BJ (cell line): ENCODE measurements at regions of chr4 and their contacts with region 1.

Region 1: DNA sequence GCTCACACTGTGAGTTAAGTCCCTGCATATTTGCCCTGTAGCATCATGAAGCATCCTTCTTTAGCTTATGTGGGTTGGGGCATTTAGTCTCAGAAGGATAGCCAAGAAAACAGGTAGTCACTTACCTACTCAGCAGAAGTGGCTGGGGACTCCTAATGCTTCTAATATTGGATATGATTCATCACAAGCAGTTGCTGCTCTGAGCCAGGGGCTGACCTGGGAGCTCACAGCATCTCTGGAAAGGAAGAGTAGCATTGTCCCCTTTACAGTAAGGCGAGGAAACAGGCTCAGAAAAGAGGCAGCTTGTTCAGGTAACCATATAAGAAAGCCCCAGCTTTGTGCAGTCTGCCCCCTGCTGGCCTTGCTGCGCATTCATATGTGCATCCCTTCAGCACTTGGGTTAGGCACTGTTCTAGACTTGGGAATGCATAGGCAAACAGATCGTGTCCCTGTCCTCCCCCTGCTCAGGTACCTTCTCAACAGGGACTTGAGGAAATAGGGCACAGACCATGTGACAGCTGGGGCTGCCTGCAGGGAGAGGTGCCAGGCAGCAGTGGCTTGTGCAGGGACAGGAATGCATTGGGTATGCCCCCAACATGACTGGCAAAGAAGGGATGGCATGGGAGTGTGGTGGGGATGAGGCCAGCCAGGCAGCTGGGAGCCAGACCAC is 35.7 kb upstream of the TBC1D14 start:
- DNase-seq: no peak
- H3K4me3 ChIP-seq: no peak overlapping the region
- H3K27me3 ChIP-seq: no peaks in the 10 kb centered on the region
- CTCF ChIP-seq: peak; percentile 84

Region 2: GRCh38 chr4:6716018-6716911 is 157.7 kb before region 1 on chr4 and contains the start of gene BLOC1S4:
- CTCF ChIA-PET with region 1: interaction called, 110 read pairs
- POLR2A ChIA-PET with region 1: no interaction called
- DNase-seq: peak; percentile 43
- H3K4me3 ChIP-seq: peak within 1 kb of the TSS; percentile 92
- H3K27me3 ChIP-seq: no peaks in the 10 kb centered on the region
- CTCF ChIP-seq: peak; percentile 9; the same call in 1 of the 2 replicates
- polyA plus RNA-seq, gene BLOC1S4: 10.4 and 12.6 TPM in 2 replicates

Region 3: GRCh38 chr4:6857009-6857882 is 16.7 kb before region 1 on chr4:
- CTCF ChIA-PET with region 1: interaction called, 26 read pairs
- POLR2A ChIA-PET with region 1: no interaction called
- DNase-seq: no peak
- H3K4me3 ChIP-seq: no peak overlapping the region
- H3K27me3 ChIP-seq: no peaks in the 10 kb centered on the region
- CTCF ChIP-seq: no peak

Region 4: GRCh38 chr4:6885951-6886557 is 12.1 kb after region 1 on chr4:
- CTCF ChIA-PET with region 1: interaction called, 42 read pairs
- POLR2A ChIA-PET with region 1: no interaction called
- DNase-seq: no peak
- H3K4me3 ChIP-seq: no peak overlapping the region
- H3K27me3 ChIP-seq: no peaks in the 10 kb centered on the region
- CTCF ChIP-seq: no peak; the same call in 1 of the 2 replicates

Region 5: DNA sequence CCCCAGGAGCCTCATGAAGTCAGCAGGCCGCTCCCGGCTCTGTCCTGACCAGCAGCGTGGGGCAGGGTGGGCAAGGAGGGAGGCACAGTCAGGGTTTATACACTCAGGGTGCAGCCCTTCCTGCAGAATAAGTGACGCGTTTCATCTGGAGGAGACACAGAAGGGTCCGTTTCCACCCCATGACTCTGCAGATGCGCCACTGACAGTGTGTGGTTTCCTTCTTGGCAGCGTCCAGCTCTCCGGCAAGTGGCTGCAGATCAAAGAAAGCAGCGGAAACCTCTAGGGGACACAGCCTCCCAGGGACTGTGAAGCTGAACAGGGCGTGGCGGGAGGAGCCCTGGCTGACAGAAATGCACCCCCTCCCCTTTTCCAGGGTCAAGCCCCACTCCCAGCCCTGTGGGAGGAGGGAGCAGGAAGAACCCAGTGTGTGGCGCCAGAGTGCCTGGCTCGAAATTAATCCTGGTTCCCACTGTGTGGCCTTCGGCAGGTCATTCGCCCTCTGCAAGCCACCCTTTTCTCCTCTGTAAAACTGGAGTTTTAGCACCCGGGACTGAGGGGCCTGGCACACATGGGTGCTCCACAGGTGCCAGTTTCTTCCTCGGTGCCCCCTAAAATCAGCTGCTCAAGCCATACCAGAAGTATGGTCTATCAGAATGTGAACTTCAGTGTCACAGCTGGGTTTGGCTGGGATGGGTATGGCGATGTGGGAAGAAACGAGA is 18.4 kb after region 1 on chr4:
- CTCF ChIA-PET with region 1: interaction called, 42 read pairs
- POLR2A ChIA-PET with region 1: no interaction called
- DNase-seq: no peak
- H3K4me3 ChIP-seq: no peak overlapping the region
- H3K27me3 ChIP-seq: no peaks in the 10 kb centered on the region
- CTCF ChIP-seq: peak; percentile 28; the same call in 1 of the 2 replicates

Region 6: GRCh38 chr4:6964858-6965257 is 90.9 kb after region 1 on chr4:
- CTCF ChIA-PET with region 1: no interaction called
- POLR2A ChIA-PET with region 1: no interaction called
- DNase-seq: no peak
- H3K4me3 ChIP-seq: no peak overlapping the region
- H3K27me3 ChIP-seq: no peaks in the 10 kb centered on the region
- CTCF ChIP-seq: no peak